ENCODE measurements at regions of chr17 and their contacts with region 1.

Region 1: DNA sequence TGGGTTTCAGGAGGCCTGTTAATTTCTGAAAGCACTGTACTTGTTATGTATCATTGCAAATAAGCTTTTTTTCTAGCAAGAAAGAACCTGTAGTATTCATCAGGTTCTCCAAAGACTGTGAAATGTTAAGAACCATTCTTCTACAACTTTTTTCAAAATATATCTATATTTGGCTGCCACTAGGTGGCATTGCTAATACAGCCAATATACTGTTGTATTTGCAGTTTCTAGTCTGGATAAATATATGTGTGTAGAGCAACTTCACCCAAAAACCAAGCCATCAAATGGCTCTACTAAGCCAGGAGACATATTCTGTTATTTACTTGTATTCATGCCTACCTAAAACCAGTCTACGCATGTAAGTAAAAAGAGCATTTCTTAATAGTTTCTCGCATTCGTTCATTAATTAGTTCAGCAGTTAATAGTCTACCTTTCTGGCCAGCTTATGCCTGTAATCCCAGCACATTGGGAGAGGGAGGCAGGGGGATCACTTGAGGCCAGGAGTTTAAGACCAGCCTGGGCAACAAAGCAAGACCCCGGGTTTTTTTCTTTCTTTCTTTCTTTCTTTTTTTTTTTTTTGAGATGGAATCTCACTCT is 39.5 kb downstream of the VMP1 start:
- DNase-seq: peak; percentile 30
- H3K27ac ChIP-seq: peak overlapping the region; percentile 17; the same call in 1 of the 2 replicates
- CTCF ChIP-seq: peak; percentile 82

Region 2: DNA sequence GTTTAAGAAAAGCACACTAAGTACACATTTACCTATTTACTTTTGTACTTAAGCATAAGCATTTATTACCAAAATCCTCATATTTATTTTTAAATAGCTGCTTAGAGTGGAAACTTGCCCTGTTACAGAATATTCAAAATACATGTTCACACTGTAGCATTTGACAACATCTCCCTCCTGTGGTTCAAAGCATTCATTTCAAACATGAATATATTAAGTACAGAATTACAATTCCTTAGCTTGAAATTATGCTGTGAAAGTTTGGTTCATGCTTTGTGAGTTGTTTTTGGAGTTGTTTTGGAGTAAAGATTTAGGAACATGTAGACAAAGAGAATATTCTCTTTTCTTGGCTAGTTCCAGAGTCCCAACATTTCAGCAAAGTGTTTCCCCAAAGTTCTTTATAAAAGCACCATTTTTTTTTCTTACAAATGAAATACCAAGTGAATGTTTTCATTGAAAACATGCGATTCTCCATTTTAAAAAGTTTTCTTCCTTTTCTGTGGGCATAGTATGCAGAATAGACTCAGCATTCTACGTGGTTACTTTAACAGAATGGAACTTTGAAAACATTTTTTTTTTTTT is 112.6 kb after region 1 on chr17:
- CTCF ChIA-PET with region 1: interaction called, 12 read pairs
- POLR2A ChIA-PET with region 1: no interaction called
- DNase-seq: no peak
- H3K27ac ChIP-seq: peak overlapping the region; percentile 37; the same call in 1 of the 2 replicates
- CTCF ChIP-seq: peak; percentile 74

Region 3: DNA sequence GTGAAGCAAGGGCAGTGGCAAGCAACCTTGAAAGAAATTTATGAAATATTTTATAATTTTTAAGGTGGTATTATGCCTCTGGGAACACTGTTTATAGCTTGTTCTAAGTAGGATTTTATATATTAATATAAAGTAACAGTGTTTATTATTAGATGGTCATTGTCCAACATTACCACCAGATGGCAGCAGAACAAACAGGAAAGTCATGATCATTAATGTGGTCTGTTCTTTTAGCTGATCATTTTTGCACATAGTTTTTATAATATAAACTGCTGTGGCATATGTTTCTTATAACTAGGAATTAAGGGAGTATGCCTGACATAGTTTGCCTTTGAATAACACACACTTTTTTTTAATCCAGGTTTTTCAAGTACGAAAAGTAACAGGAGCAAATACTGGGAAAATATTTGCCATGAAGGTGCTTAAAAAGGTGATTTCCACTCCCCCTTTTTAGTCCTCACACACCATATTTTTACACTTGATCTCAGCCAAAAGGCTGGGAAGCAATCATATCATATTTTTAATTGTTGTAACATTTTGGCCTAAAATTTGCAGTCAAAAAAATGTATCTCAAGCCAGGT is 167.4 kb after region 1 on chr17:
- CTCF ChIA-PET with region 1: interaction called, 13 read pairs
- POLR2A ChIA-PET with region 1: no interaction called
- DNase-seq: peak; percentile 64
- H3K27ac ChIP-seq: no peak overlapping the region
- CTCF ChIP-seq: peak; percentile 79